ENCODE measurements at regions of chr1 and their contacts with region 1.

Region 1: GRCh38 chr1:156838981-156839410 is 19.9 kb downstream of the INSRR start:
- DNase-seq: peak; percentile 81
- H3K4me3 ChIP-seq: no peak overlapping the region; a peak in 1 of 4 replicates
- H3K27ac ChIP-seq: peak overlapping the region in 1 of 2 experiments; percentile 43; a peak in 2 of 4 replicates
- H3K4me1 ChIP-seq: peaks cover 0 to 54% of the 10 kb centered on the region in 2 experiments; a peak in 2 of 4 replicates
- H3K27me3 ChIP-seq: peaks cover 9% of the 10 kb centered on the region; the same call in 1 of the 2 replicates
- CTCF ChIP-seq: peak; percentile 94
- EP300 ChIP-seq: no peak; a peak in 1 of 4 replicates
- RAD21 ChIP-seq: peak; percentile 84

Region 2: GRCh38 chr1:156767101-156767878 is 71.7 kb before region 1 on chr1 and contains the start of gene PRCC:
- CTCF ChIA-PET with region 1: interaction called, 30 read pairs
- POLR2A ChIA-PET with region 1: no interaction called
- DNase-seq: peak; percentile 87
- H3K4me3 ChIP-seq: peak within 1 kb of the TSS; percentile 72 to 86
- H3K27ac ChIP-seq: peak within 1 kb of the TSS; percentile 77 to 90
- H3K4me1 ChIP-seq: peaks cover 23 to 26% of the 10 kb centered on the region in 2 experiments; a peak in 3 of 4 replicates
- H3K27me3 ChIP-seq: no peaks in the 10 kb centered on the region
- CTCF ChIP-seq: 0 out of 2 replicates have a peak, but pooled peaks have one; percentile 7
- EP300 ChIP-seq: peak; percentile 10 to 20; a peak in 2 of 4 replicates
- RAD21 ChIP-seq: peak; percentile 29; the same call in 1 of the 2 replicates
- polyA plus RNA-seq, gene PRCC: 39.2 and 51.8 TPM in 2 replicates

Region 3: DNA sequence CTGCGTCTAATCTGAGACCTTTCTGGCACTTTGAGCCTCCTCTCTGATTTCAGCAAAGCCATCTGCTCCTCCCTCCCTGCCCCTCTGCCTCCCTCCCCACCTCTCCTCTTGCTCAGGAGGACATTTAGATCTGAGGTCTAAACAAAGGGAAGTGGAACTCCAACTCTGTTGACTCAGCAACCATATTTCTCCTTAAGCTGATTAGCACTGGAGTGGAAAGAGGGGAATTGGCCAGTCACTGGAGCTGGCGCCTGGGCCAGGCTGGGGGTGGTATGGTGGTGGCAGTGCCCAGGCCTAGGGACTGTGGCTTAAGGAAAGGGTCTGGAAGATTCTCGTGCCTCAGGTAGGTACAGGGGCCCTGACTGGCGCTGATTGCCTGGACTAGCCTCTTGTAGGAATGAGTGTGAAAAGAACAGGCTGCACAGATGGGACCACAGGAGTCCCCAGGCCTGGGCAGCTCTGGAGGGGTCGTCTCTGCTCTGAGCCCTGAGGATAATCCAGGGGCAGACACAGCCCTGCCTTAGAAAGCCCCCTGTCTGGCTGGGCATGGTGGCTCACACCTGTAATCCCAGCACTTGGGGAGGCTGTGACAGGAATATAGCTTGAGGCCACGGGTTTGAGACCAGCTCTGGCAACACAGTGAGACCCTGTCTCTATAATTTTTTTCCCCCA is 34.3 kb before region 1 on chr1:
- CTCF ChIA-PET with region 1: interaction called, 186 read pairs
- POLR2A ChIA-PET with region 1: interaction called, 8 read pairs
- DNase-seq: peak; percentile 51
- H3K4me3 ChIP-seq: no peak overlapping the region
- H3K27ac ChIP-seq: peak overlapping the region; percentile 28 to 90; a peak in 3 of 4 replicates
- H3K4me1 ChIP-seq: peaks cover 24 to 76% of the 10 kb centered on the region in 2 experiments
- H3K27me3 ChIP-seq: no peaks in the 10 kb centered on the region
- CTCF ChIP-seq: no peak
- EP300 ChIP-seq: 0 out of 4 replicates have a peak, but pooled peaks of 1 of the 2 experiments have one; percentile 27
- RAD21 ChIP-seq: no peak

Region 4: DNA sequence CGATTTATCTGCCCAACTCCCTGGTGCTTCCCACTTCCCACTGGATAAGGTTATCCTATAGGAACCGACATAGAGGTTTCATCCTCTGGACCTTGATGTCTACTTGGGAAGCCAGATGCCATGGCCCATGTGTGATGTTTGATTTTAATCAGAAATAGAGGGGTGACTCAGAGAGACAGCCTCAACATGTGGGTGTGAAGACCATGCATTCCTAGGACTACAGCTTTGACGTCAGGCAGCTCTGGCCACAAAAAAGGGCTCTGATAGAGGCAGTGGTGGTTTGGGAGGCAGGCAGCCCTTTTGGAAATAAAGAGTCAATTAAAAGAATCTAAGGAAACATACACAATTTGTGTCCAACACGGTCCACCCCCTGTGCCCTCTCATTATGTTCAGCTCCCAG is 17.2 kb before region 1 on chr1:
- CTCF ChIA-PET with region 1: interaction called, 25 read pairs
- POLR2A ChIA-PET with region 1: interaction called, 3 read pairs
- DNase-seq: no peak
- H3K4me3 ChIP-seq: no peak overlapping the region
- H3K27ac ChIP-seq: no peak overlapping the region
- H3K4me1 ChIP-seq: no peaks in the 10 kb centered on the region
- H3K27me3 ChIP-seq: no peaks in the 10 kb centered on the region
- CTCF ChIP-seq: no peak
- EP300 ChIP-seq: no peak
- RAD21 ChIP-seq: no peak

Region 5: GRCh38 chr1:156852418-156852874 is 13.4 kb after region 1 on chr1:
- CTCF ChIA-PET with region 1: interaction called, 476 read pairs
- POLR2A ChIA-PET with region 1: interaction called, 12 read pairs
- DNase-seq: peak; percentile 96
- H3K4me3 ChIP-seq: no peak overlapping the region
- H3K27ac ChIP-seq: peak overlapping the region in 1 of 2 experiments; percentile 94; a peak in 2 of 4 replicates
- H3K4me1 ChIP-seq: peaks cover 0 to 45% of the 10 kb centered on the region in 2 experiments; a peak in 3 of 4 replicates
- H3K27me3 ChIP-seq: peaks cover 6% of the 10 kb centered on the region; the same call in 1 of the 2 replicates
- CTCF ChIP-seq: no peak
- EP300 ChIP-seq: peak in 1 of 2 experiments; percentile 88; a peak in 2 of 4 replicates
- RAD21 ChIP-seq: peak; percentile 0; the same call in 1 of the 2 replicates

Region 6: GRCh38 chr1:156892190-156893047 is 53.4 kb after region 1 on chr1:
- CTCF ChIA-PET with region 1: interaction called, 191 read pairs
- POLR2A ChIA-PET with region 1: interaction called, 8 read pairs
- DNase-seq: peak; percentile 94
- H3K4me3 ChIP-seq: no peak overlapping the region; a peak in 1 of 4 replicates
- H3K27ac ChIP-seq: no peak overlapping the region
- H3K4me1 ChIP-seq: peaks cover 23 to 38% of the 10 kb centered on the region in 2 experiments; a peak in 3 of 4 replicates
- H3K27me3 ChIP-seq: no peaks in the 10 kb centered on the region
- CTCF ChIP-seq: peak; percentile 92
- EP300 ChIP-seq: no peak
- RAD21 ChIP-seq: peak; percentile 75

Measured in SK-N-SH (cell line).